AG04450 (cell line): ENCODE measurements at regions of chr6 and their contacts with region 1.

Region 1: GRCh38 chr6:119147101-119148053 is 68.9 kb upstream of the FAM184A start:
- DNase-seq: peak; percentile 92
- H3K4me3 ChIP-seq: peak overlapping the region; percentile 25; the same call in 1 of the 2 replicates
- H3K27ac ChIP-seq: peak overlapping the region; percentile 73
- H3K27me3 ChIP-seq: no peaks in the 10 kb centered on the region
- CTCF ChIP-seq: no peak

Region 2: DNA sequence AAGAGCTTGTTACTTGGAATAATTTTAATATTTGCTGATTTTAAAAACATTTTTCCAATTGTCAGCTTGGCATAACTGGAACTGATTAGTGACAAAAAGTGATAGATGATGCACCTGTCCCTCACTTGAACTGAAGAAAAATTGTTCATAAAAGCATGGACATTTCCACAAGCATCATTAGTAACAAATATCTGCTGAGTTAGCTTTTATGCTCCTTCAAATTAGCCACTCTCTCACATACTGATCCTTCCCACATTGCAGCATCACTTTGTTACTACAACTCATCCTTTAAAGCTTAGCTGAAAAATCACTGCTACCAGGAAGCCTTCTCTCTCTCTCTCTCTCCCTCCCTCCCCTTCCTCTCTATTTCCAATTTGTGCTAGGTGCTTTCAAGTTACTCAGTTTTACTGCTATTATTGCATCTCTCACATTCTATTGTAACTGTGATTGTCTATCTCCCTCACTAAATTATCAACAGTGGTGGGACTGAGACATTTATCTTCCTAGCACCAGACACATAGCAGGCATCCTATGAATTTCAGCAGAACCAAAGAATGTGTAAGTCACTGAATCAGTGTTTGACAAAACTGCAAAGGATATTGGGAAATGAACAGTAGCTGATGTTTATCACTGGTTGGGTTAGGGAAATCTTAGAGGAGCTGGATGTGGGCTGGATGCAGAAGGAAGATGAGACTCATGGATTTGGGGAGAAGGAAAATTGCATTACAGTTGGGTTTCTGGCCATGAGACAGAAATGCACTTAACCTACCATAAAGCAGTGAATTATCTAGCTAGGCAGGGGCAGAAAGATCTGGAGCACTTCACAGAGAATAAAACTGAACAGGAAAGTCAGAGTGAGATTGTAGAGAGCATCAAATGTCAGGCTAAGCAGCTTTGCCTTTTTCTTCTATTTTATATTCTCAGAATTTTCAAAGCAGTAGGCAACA is 727.7 kb before region 1 on chr6:
- CTCF ChIA-PET with region 1: no interaction called
- POLR2A ChIA-PET with region 1: no interaction called
- DNase-seq: no peak
- H3K4me3 ChIP-seq: no peak overlapping the region
- H3K27ac ChIP-seq: no peak overlapping the region
- H3K27me3 ChIP-seq: no peaks in the 10 kb centered on the region
- CTCF ChIP-seq: no peak

Region 3: DNA sequence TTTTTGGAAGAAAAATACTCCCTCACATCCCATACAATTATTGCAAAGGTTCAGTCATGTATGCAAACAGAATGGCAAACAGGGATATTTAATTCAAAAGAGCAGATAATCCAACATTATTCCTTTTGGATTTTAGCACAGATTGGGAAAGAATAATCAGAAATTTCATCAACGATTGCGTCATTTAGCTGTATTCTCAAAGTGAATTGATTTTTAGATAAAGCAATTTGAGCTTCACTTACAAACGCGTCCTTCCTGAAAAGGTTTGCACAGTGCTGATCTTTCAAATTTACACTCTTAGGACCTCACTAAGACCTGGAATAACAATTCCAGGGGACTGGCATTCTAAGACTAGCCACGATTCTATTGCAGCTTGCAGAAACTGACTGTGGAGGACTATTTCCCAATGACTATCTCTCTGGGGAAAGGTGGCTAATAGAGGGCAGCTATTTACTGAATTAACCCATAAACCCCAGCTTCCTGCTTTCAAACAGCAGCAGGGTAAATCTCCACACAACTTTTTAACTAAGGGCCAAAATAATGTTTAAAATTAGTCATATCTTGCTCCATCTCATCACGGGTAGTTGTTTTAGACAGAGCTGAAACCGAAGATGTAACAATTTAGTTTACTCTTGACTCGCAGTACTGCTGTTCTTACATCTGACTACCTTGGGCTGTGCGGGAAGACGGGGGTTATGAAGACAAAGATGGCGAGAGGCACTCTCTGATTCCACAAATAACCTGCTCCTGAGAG is 62.3 kb after region 1 on chr6:
- CTCF ChIA-PET with region 1: interaction called, 13 read pairs
- POLR2A ChIA-PET with region 1: no interaction called
- DNase-seq: no peak
- H3K4me3 ChIP-seq: no peak overlapping the region
- H3K27ac ChIP-seq: no peak overlapping the region
- H3K27me3 ChIP-seq: no peaks in the 10 kb centered on the region
- CTCF ChIP-seq: no peak

Region 4: GRCh38 chr6:119308048-119308570 is 160.7 kb after region 1 on chr6:
- CTCF ChIA-PET with region 1: no interaction called
- POLR2A ChIA-PET with region 1: no interaction called
- DNase-seq: no peak
- H3K4me3 ChIP-seq: no peak overlapping the region
- H3K27ac ChIP-seq: no peak overlapping the region
- H3K27me3 ChIP-seq: no peaks in the 10 kb centered on the region
- CTCF ChIP-seq: no peak

Region 5: GRCh38 chr6:119343167-119343566 is 195.8 kb after region 1 on chr6:
- CTCF ChIA-PET with region 1: interaction called, 12 read pairs
- POLR2A ChIA-PET with region 1: no interaction called
- DNase-seq: no peak
- H3K4me3 ChIP-seq: no peak overlapping the region
- H3K27ac ChIP-seq: no peak overlapping the region
- H3K27me3 ChIP-seq: no peaks in the 10 kb centered on the region
- CTCF ChIP-seq: no peak

Region 6: GRCh38 chr6:119349323-119350042 is 202.1 kb after region 1 on chr6 and contains the start of gene MAN1A1:
- CTCF ChIA-PET with region 1: interaction called, 33 read pairs
- POLR2A ChIA-PET with region 1: no interaction called
- DNase-seq: peak; percentile 15
- H3K4me3 ChIP-seq: peak within 1 kb of the TSS; percentile 86
- H3K27ac ChIP-seq: peak within 1 kb of the TSS; percentile 25
- H3K27me3 ChIP-seq: no peaks in the 10 kb centered on the region
- CTCF ChIP-seq: no peak
- polyA plus RNA-seq, gene MAN1A1: 18.7 and 27.5 TPM in 2 replicates

Region 7: DNA sequence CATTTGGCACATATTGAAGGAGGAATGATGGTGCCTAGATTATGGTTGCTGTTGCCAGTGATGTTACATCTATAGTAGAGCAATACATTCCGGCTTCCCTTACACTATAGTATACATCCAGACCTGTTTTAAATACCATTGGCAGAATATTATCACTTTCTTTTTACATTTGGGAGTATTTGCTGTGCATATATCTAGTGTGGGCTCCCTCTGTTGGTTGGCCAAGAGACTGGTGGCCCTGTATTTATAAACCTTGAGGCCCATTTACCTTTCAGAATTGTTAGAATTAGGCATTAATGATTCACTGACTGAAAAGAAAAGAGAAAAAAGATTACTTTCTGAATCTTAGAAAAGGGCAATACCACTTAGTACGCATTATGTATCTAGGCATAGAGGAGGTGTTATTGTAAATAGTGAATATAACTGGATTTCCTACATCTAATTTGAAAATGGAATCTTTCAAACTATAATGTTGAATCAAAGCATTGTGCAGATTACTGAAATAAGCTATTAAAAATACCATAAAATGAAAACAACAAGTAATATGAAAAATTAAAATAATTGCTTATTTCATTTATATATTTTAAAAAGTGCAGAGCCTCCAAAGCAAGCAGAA is 831.0 kb after region 1 on chr6:
- CTCF ChIA-PET with region 1: interaction called, 28 read pairs
- POLR2A ChIA-PET with region 1: no interaction called
- DNase-seq: no peak
- H3K4me3 ChIP-seq: no peak overlapping the region
- H3K27ac ChIP-seq: no peak overlapping the region
- H3K27me3 ChIP-seq: no peaks in the 10 kb centered on the region
- CTCF ChIP-seq: peak; percentile 65